ENCODE measurements at regions of chr17 and their contacts with region 1.

Region 1: DNA sequence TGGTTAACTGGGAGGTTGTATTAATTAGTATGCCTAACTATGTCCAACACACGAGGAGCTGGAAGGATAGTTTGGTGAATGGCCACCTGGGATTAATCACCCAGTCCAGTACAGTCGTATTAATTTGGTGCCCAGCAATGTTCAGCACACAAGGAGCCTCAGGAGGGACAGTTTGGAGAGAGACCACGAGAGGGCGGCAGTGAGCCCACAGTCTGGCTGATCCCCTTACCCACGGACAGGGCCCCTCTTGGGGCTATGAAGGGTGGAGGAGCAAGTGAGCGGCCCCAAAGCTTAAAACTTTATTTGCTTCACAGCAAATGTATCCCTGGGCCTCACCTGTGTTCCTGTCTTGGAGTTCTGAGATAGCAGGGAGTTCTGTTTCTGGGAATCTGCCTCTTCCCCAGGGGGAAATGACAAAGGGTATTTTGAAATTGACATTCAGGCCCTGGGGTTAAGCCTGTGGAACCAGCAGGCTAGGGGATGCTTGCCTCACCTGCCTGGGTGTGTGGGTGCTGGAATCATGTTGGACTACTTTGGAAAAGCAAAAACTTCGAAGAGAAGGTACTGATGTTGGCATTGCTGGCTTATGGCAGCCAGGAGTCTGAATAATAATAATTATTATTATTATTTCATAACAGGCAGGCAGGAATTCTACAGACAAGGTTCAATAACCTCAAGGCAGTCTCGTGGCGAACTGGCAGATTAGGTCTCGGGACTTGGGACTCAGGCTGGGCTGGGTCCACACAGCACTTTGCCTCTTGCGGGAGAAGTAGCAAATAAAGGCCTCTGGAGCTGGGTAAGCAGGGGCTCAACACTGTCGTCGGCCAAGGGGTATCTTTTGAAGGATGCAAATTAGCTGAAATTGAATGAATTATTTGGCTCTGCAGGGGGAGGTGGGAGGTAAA is 227.6 kb upstream of the ASIC2 start:
- H3K4me3 ChIP-seq: no peak overlapping the region
- H3K27ac ChIP-seq: no peak overlapping the region
- H3K4me1 ChIP-seq: no peaks in the 10 kb centered on the region
- CTCF ChIP-seq: peak; percentile 38; the same call in 1 of the 2 replicates

Region 2: DNA sequence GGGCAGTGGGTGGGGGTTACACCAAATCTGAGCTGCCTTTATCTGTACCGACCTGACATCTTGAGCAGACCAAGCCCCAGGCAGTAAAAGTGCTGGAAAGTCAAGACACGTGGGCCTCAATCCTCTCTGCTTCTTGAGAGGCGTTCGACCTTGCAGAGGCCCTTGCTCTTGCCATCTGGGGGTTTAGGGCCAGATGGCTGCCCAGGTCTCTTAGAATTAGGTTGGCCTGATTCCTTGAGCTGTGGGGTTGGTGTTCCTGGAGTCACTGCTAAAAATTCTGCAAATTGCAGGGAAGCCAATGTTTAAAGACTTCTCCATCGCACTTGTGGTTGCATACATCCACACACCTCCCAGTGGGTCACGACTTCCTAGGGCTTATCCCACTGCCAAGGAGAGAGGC is 10.6 kb after region 1 on chr17:
- CTCF ChIA-PET with region 1: interaction called, 43 read pairs
- POLR2A ChIA-PET with region 1: no interaction called
- H3K4me3 ChIP-seq: no peak overlapping the region
- H3K27ac ChIP-seq: no peak overlapping the region
- H3K4me1 ChIP-seq: no peaks in the 10 kb centered on the region
- CTCF ChIP-seq: no peak

Region 3: GRCh38 chr17:33560165-33560564 is 39.5 kb after region 1 on chr17:
- CTCF ChIA-PET with region 1: interaction called, 18 read pairs
- POLR2A ChIA-PET with region 1: no interaction called
- H3K4me3 ChIP-seq: no peak overlapping the region
- H3K27ac ChIP-seq: no peak overlapping the region
- H3K4me1 ChIP-seq: no peaks in the 10 kb centered on the region
- CTCF ChIP-seq: no peak

Region 4: GRCh38 chr17:33647956-33648355 is 127.3 kb after region 1 on chr17:
- CTCF ChIA-PET with region 1: interaction called, 10 read pairs
- POLR2A ChIA-PET with region 1: no interaction called
- H3K4me3 ChIP-seq: no peak overlapping the region
- H3K27ac ChIP-seq: no peak overlapping the region
- H3K4me1 ChIP-seq: no peaks in the 10 kb centered on the region
- CTCF ChIP-seq: peak; percentile 47; the same call in 1 of the 2 replicates

Region 5: DNA sequence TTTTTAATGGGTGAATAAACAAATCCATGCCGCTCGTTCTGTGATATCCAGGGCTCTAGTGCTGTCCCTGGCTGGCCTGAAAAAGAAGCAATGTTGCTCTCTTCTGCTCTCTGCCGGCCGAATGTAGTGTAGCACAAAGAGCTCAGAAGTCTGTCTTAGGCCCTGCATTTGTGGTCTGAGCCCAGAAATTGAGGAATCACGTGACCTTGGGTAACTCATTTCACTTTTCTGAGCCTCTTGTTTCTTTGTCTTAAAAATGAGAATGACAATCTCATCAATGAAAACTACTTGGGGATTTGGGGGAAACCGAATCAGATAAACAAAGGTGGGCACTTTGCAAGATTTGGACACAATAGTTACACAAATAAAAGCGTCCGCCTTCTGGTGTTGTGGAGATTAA is 154.0 kb after region 1 on chr17:
- CTCF ChIA-PET with region 1: interaction called, 36 read pairs
- POLR2A ChIA-PET with region 1: no interaction called
- H3K4me3 ChIP-seq: no peak overlapping the region
- H3K27ac ChIP-seq: no peak overlapping the region
- H3K4me1 ChIP-seq: no peaks in the 10 kb centered on the region
- CTCF ChIP-seq: peak; percentile 24; the same call in 1 of the 2 replicates